ENCODE measurements at regions of chr20 and their contacts with region 1.

Region 1: DNA sequence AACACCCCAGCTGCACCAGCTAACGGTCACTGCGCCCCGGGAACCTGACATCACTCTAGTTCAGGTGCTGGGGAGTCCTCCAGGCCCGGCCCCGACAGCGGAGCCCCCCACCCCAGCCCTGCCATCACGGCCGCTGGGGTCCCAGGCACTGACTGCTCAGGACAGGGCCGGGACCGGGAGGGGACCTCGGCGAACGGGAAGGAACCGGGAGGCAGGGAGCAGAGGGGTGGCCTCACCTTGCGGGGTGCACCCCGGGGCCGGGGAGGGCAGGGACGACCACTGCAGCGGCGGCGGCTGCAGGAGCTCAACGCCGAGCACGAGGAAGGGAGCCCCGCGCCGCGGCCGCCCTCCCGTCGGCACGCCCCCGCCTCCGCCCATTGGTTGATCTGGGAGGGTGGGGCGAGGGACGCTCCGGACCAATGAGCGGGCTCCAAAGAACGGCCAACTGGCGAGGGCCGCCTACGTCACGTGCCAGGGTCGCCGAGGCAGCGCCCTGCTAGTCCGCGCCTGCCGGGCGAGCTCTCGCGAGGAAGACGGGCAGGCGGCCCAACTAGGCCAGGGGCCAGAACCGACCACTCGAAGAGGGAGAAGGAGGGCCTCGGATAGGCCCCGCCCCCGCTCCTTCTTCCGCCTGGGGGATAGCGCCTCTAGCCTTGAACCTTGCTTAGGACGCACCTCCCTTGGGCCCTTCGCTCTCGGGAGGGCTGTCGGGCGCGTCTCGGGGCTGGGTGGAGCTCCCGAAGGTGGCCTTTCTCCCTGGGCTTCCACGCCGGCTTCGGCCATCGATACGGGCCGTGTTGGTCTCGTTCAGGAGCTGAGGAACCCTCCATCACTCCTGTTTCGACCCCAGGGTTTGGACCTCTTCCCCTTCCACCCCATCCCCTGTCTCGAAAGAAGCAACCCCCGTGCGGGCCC is at the start of gene ADISSP:
- DNase-seq: peak; percentile 99
- ATAC-seq: peak; percentile 93
- H3K4me3 Mint-ChIP-seq: peak within 1 kb of the TSS; percentile 81
- H3K27ac Mint-ChIP-seq: peak within 1 kb of the TSS; percentile 70
- H3K4me1 Mint-ChIP-seq: peaks cover 25% of the 10 kb centered on the region
- H3K27me3 Mint-ChIP-seq: no peaks in the 10 kb centered on the region
- total RNA-seq, gene ADISSP: 46.5 to 57.3 TPM

Region 2: DNA sequence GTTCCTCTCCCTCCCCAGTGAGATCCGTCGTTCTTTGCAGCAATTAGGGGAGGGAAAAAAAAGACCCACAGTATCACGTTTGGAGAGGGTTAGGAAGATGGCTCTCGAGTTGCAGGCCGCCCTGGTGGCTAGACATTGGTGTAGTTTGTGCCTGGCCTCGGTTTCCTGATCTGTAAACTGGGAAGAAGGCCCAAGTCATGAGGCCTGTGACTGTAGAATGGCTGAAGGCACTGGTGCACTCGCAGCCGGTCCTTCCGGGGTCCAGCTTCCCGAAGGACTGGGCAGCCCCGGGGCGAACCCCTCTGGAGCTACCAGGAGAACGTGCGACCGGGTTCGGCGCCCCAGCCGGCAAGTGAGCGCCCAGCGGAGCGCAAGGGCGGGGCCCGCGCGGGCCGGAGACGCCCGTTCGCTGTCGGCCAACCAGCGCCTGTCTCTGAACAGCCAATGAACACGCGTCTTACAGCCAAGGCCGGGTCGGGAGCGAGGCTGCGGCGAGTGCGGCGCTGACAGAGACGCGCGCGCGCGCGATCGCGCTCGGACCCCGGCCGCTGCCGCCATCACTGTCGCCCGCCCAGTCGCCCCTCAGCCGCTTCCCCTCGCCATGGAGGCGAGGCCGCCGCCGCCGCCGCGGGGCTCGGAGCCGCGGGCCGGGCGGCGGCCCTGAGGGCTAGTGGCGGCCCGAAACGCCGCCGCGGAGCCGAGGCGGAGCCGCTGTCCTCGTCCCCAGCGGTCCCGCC is 894.5 kb before region 1 on chr20 and contains the start of gene PTPRA:
- CTCF ChIA-PET with region 1: no interaction called
- POLR2A ChIA-PET with region 1: no interaction called
- intact Hi-C with region 1: loop called in 1 of 2 experiments (anchors 5 kb)
- DNase-seq: peak; percentile 96
- ATAC-seq: peak; percentile 91
- H3K4me3 Mint-ChIP-seq: peak within 1 kb of the TSS; percentile 84
- H3K27ac Mint-ChIP-seq: peak within 1 kb of the TSS; percentile 95
- H3K4me1 Mint-ChIP-seq: peaks cover 44% of the 10 kb centered on the region
- H3K27me3 Mint-ChIP-seq: no peaks in the 10 kb centered on the region
- total RNA-seq, gene PTPRA: 58.5 to 86.3 TPM

Region 3: GRCh38 chr20:3407771-3408637 is 359.7 kb before region 1 on chr20:
- CTCF ChIA-PET with region 1: interaction called, 3 read pairs
- POLR2A ChIA-PET with region 1: interaction called, 6 read pairs
- intact Hi-C with region 1: loop called in 1 of 2 experiments (anchors 1 kb)
- DNase-seq: peak; percentile 80
- ATAC-seq: peak; percentile 64
- H3K4me3 Mint-ChIP-seq: peak overlapping the region; percentile 83
- H3K27ac Mint-ChIP-seq: peak overlapping the region; percentile 88
- H3K4me1 Mint-ChIP-seq: peaks cover 32% of the 10 kb centered on the region
- H3K27me3 Mint-ChIP-seq: peaks cover 3% of the 10 kb centered on the region

Region 4: DNA sequence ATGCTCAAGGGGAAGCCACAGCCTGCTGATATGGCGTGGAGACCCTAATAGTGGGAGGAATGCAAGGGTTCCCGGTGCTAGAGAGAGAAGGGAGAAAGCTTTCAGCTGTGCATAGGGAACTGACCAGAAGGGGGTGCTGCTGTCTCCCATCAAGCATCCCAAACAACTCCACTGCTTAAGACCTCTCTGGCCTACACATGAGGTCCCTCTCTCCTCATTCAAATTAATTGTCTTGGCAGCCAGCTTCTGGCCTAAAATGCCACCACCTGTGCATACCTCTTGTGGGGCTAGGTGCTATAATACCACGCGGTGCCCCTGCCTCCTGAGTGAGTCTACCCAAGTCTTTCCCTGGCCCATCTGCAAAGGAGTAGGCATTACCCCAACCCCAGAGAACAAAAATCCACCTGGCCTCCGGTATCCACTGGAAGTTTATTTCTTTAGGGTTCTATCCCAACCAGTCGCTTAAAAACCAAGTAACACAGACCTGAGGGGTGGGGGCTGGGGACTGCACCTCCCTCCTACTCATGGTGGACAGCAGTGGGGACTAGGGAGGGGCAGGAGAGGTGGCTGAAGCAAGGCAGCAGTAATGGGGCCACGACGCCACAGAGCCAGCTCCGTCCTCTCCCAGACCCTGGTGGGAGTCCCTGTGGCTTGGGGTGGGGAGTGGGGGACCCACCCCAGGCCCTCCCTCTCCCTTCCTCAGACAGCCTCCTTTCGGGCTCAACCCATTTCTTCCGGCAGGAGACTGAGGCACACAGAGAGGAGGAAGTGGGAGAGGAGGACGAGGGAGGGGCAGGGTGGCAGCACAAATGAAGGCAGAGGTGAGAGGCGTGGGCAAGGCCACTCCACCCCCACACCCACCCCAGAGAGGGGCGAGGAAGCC is 14.3 kb before region 1 on chr20:
- CTCF ChIA-PET with region 1: interaction called, 18 read pairs
- POLR2A ChIA-PET with region 1: interaction called, 5 read pairs
- intact Hi-C with region 1: loop called (anchors 1 to 2 kb)
- DNase-seq: peak; percentile 78
- ATAC-seq: peak; percentile 61
- H3K4me3 Mint-ChIP-seq: no peak overlapping the region
- H3K27ac Mint-ChIP-seq: no peak overlapping the region
- H3K4me1 Mint-ChIP-seq: peaks cover 7% of the 10 kb centered on the region
- H3K27me3 Mint-ChIP-seq: peaks cover 3% of the 10 kb centered on the region

Region 5: GRCh38 chr20:3795511-3796468 is 28.1 kb after region 1 on chr20 and contains the start of gene CDC25B:
- CTCF ChIA-PET with region 1: interaction called, 4 read pairs
- POLR2A ChIA-PET with region 1: no interaction called
- intact Hi-C with region 1: loop called (anchors 1 kb)
- DNase-seq: peak; percentile 95
- ATAC-seq: peak; percentile 82
- H3K4me3 Mint-ChIP-seq: peak within 1 kb of the TSS; percentile 93
- H3K27ac Mint-ChIP-seq: peak within 1 kb of the TSS; percentile 98
- H3K4me1 Mint-ChIP-seq: peaks cover 47% of the 10 kb centered on the region
- H3K27me3 Mint-ChIP-seq: no peaks in the 10 kb centered on the region
- total RNA-seq, gene CDC25B: 79.8 to 96.2 TPM

Region 6: GRCh38 chr20:3846740-3847428 is 79.2 kb after region 1 on chr20 and contains the start of gene MAVS:
- CTCF ChIA-PET with region 1: interaction called, 4 read pairs
- POLR2A ChIA-PET with region 1: no interaction called
- intact Hi-C with region 1: loop called in 1 of 2 experiments (anchors 1 kb)
- DNase-seq: peak; percentile 91
- ATAC-seq: peak; percentile 98
- H3K4me3 Mint-ChIP-seq: peak within 1 kb of the TSS; percentile 88
- H3K27ac Mint-ChIP-seq: peak within 1 kb of the TSS; percentile 84
- H3K4me1 Mint-ChIP-seq: peaks cover 22% of the 10 kb centered on the region
- H3K27me3 Mint-ChIP-seq: no peaks in the 10 kb centered on the region
- total RNA-seq, gene MAVS: 23.2 to 25.9 TPM

Region 7: DNA sequence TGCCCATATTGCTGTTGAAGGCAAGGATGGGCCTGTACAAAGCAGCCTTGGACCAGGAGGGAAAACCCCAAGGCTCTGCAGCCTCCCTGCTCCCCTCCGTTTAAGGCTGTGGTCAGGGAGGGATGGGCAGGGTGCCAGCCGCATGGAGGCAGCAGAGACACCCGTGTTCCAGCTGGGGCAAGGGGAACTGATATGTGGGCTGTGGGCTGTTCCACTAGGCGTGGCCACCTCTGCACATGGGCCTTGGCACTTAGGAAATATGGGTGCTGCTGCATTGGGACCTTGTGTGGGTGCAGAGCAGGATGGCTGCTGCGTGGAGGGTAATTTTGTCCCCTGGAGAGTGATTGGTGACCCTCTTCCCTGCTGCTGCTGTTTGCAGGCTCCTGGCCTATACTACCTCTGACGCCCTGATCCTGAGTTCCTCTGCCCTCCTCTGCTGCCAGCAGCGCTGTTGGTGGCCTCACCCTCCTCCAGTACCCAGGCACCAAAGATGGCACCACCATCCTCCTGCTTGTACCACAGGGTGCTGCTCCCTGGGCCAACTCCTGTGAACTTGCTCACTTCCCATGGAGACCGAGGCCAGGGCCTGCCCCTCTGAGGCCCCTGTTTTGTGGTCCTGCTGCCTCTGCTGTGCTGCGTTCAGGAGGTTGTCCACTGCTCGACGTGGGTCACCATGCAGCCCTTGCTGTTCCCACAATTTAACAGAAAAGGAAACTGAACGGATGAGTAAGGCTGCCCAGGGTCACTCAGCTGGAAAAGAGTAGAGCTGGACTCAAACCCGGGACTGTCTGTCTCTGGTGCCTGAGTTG is 156.8 kb after region 1 on chr20:
- CTCF ChIA-PET with region 1: no interaction called
- POLR2A ChIA-PET with region 1: no interaction called
- intact Hi-C with region 1: no loop called
- DNase-seq: no peak
- ATAC-seq: no peak
- H3K4me3 Mint-ChIP-seq: no peak overlapping the region
- H3K27ac Mint-ChIP-seq: peak overlapping the region; percentile 61
- H3K4me1 Mint-ChIP-seq: peaks cover 46% of the 10 kb centered on the region
- H3K27me3 Mint-ChIP-seq: no peaks in the 10 kb centered on the region

Region 8: DNA sequence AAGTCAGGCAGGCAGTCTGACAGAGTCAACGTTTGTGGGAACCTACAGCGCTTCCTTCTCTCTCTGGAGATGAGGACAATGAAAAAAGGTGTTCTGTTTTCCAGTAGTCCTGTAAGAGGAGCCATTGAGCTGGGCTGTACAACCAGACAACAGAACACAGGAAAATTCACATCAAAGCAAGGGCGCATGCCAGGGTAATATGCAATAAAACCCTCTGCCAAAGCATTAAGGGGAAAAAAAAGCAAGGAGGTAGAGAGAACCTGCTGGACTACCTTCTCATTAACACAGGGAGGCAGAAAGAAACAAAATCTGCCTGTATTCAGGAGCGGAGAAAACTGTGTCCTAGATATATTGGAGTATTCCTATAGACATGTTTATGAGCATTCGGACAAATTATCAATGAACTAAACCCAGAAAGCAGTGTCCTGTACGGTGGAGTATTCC is 246.4 kb after region 1 on chr20:
- CTCF ChIA-PET with region 1: no interaction called
- POLR2A ChIA-PET with region 1: no interaction called
- intact Hi-C with region 1: loop called in 1 of 2 experiments (anchors 1 kb)
- DNase-seq: peak; percentile 44
- ATAC-seq: peak; percentile 28
- H3K4me3 Mint-ChIP-seq: peak overlapping the region; percentile 92
- H3K27ac Mint-ChIP-seq: peak overlapping the region; percentile 83
- H3K4me1 Mint-ChIP-seq: peaks cover 37% of the 10 kb centered on the region
- H3K27me3 Mint-ChIP-seq: peaks cover 2% of the 10 kb centered on the region